Activated naive CD4-positive, alpha-beta T cell treated with anti-CD3 and anti-CD28 coated beads for 36 hours (primary cell): ENCODE measurements at regions of chr12 and their contacts with region 1.

Region 1: DNA sequence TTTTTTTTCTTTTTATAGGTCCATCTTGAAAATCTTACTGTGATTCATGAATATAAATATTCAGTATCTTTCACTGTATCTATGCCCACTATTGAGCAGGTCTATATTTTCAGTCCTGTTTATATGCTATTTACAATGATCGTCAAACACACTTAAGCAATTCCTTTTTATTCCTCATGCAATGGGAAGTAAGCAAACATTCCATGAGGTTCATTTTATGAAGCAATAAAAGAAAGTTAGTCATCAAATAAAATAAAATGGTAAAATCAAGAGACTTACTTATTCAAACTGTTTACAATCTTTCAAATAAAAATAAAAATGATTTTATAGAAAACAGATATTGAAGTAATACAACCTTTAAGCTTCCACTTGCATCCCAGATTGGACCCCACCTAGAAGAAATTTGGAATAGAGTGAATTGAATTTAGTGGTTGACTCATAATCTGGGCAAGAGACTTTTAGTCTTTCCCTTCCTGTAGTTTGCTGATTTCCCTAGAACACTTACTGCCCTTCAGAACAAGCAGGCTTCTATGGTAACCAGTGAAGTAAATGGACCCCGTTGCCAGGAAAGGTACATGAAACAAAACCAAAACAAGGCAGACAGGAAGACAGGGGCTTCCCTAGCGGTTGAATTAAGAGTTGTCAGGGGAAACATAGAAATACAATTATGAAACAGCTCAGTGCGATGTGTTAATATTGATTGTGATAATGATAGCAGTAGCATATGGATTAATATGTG is 241.0 kb upstream of the ATP2B1 start:
- DNase-seq: peak; percentile 68
- H3K4me3 Mint-ChIP-seq: no peak overlapping the region
- H3K27ac Mint-ChIP-seq: no peak overlapping the region
- H3K4me1 Mint-ChIP-seq: peaks cover 39% of the 10 kb centered on the region
- H3K27me3 Mint-ChIP-seq: no peaks in the 10 kb centered on the region

Region 2: DNA sequence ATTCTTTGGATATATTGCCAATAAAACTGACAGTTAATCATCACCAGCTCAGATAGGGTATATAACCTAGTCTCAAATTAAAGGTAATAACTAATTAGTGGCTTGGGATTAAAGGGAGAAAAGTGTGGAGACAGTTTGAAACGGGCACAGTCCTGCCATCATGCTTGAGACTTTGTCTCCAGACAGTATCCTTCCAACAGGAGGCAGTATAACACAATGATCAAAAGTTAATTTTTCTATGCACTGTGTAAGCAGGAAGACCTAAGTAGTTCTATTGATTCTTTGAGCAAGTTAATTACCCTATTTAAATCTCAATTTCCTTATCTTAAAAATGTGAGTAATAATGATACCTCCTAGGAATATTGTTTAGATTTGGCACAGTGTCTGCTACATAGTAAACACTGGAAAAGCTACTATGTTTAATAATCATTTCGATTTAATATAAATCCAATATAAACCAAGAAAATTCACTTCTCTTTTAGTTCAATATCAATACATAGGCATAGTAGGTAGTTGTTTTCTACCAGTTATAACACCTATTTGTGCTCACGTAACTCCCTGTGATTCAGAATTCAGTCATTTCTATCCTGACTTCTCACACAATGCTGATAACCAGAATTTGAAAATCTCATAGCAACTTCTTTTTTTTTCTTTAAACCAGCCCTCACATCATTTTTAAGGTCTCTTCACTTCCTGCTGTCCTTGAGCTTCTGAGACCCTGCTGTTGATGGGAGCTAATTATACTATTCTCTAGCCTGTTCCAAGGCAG is 478.7 kb before region 1 on chr12:
- CTCF ChIA-PET with region 1: no interaction called
- intact Hi-C with region 1: loop called (anchors 5 kb)
- DNase-seq: no peak
- H3K4me3 Mint-ChIP-seq: no peak overlapping the region
- H3K27ac Mint-ChIP-seq: no peak overlapping the region
- H3K4me1 Mint-ChIP-seq: peaks cover 44% of the 10 kb centered on the region
- H3K27me3 Mint-ChIP-seq: no peaks in the 10 kb centered on the region

Region 3: DNA sequence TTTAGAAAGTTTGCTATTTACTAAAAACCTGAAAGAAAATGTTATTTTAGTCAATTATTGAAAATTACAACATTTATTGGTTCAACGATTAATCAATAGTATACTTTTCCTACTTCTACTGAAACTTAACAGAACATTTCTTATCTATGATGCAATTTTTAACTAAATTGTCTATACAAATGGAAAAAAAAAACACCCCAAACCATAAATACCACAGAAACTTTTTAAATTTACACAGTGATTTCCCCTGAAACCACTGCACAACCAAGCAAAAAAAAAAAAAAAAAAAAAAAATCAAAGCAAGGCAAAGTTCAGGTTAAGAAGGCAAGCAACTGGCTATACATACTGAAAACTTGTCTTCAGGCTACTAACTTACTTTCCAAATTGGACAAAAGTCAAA is 351.9 kb before region 1 on chr12:
- CTCF ChIA-PET with region 1: no interaction called
- intact Hi-C with region 1: loop called (anchors 1 kb)
- DNase-seq: no peak
- H3K4me3 Mint-ChIP-seq: no peak overlapping the region
- H3K27ac Mint-ChIP-seq: peak overlapping the region; percentile 66
- H3K4me1 Mint-ChIP-seq: peaks cover 23% of the 10 kb centered on the region
- H3K27me3 Mint-ChIP-seq: no peaks in the 10 kb centered on the region

Region 4: DNA sequence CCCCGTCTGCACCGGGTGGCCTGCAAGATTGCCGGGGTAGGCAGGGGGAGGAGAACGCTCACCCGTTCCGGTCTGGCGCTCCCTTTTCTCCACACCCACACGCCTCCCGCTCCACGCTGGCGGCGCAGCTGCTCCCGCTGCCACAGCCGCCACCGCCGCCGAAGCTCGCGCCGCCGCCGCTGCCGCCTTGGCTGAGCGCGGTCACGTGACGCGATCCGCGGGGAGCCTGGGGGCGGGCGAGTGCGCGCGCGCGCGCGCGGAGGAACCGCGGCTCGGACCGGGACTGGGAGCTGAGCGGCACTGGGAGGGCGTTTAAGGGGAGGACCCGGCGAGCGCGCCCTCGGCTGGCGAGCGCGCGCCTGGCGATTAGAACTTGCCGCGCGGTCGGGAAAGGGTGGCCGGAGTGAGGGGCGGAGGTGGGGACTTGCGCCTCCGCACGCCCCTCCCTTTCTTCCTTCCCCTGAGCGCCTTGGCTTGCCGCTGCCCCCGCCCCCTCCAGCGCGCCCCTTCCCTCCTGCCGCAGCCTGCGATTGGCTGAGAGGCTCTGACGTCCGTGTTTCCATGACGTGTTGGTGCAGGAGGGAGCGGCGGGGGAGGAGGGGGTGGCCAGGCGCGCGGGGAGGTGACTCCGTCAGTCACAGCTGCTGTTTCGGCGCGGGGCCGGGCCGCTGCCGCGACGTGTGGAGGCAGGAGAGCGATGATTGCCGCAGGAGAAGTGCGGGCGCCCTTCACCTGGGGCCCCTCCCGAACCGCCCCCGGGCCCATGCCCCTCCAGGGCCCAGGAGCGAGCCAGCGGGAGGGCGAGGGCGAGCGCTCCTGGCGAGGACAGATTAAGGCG is 240.2 kb before region 1 on chr12:
- CTCF ChIA-PET with region 1: no interaction called
- intact Hi-C with region 1: loop called (anchors 1 kb)
- DNase-seq: peak; percentile 99
- H3K4me3 Mint-ChIP-seq: peak overlapping the region; percentile 79
- H3K27ac Mint-ChIP-seq: peak overlapping the region; percentile 71
- H3K4me1 Mint-ChIP-seq: peaks cover 32% of the 10 kb centered on the region
- H3K27me3 Mint-ChIP-seq: no peaks in the 10 kb centered on the region

Region 5: DNA sequence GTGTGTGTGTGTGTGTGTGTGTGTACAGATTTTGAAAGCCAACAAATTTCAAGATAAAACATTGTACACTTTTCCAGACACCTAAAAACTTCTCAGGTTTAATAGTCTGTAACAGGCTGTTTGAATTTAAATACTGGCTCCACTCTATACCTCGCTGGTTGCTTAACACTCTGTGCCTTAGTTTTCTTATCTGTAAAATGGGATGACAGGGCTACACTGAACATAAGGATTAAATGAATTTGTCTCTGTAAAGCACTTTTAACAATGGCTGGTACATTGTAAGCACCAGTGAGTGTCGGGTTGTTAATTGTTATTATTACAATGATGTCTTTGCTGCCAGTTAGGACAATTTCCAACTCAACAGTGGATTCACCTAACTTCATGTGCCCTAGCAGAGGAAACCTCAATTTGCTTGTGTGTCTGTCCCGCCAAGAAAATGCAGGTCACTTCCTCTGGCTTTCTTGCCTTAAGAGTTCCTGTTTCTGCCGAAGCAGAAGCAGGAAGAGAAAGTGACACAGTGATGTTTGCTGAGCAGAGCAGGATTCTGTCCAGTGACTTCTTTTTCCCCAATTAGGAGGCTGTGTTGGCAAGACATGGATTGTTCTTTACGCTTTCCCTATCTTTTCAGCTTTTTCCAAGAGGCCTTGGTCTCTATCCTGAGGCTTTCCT is 87.0 kb before region 1 on chr12:
- CTCF ChIA-PET with region 1: no interaction called
- intact Hi-C with region 1: loop called (anchors 1 kb)
- DNase-seq: peak; percentile 57
- H3K4me3 Mint-ChIP-seq: peak overlapping the region; percentile 70
- H3K27ac Mint-ChIP-seq: peak overlapping the region; percentile 92
- H3K4me1 Mint-ChIP-seq: peaks cover 39% of the 10 kb centered on the region
- H3K27me3 Mint-ChIP-seq: no peaks in the 10 kb centered on the region

Region 6: GRCh38 chr12:89935825-89936224 is 13.8 kb before region 1 on chr12:
- CTCF ChIA-PET with region 1: no interaction called
- intact Hi-C with region 1: loop called (anchors 1 kb)
- DNase-seq: no peak
- H3K4me3 Mint-ChIP-seq: no peak overlapping the region
- H3K27ac Mint-ChIP-seq: peak overlapping the region; percentile 53
- H3K4me1 Mint-ChIP-seq: peaks cover 28% of the 10 kb centered on the region
- H3K27me3 Mint-ChIP-seq: no peaks in the 10 kb centered on the region

Region 7: DNA sequence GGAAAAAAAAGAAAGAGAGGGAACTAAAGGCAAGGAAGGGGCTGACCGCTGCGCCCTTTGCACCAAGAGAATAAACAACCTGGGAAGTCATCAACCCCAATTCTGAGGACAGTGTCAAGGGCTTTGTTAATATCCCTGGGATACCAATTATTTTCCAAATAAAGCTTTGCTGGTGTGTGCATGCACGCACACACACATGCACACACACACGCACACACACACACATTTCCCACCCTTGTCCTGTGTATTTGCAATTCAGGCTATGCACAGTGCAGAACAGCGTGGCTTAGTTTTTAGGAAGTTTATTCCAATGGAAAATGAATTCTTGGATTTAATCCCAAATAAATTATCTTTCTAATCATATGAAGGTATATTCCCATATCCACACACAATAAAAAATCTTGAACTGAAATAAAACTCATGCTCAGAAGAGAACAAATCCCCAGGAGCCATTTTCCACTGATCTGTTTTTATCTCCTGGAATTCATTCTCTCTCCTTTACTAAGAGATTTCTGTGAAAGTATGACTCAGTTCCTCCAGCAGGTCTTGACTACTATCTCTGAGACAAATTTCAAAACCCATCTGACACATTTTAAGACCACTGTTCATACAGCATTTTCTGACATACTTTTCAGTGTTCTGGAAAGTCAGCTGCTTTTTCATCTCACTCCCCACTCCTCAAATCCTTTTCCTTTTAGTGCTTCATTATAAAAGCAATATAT is 93.5 kb after region 1 on chr12:
- CTCF ChIA-PET with region 1: no interaction called
- intact Hi-C with region 1: loop called (anchors 1 kb)
- DNase-seq: no peak
- H3K4me3 Mint-ChIP-seq: no peak overlapping the region
- H3K27ac Mint-ChIP-seq: no peak overlapping the region
- H3K4me1 Mint-ChIP-seq: peaks cover 9% of the 10 kb centered on the region
- H3K27me3 Mint-ChIP-seq: no peaks in the 10 kb centered on the region